Esophagus muscularis mucosa (tissue), 4 donors: ENCODE measurements at regions of chr17 and their contacts with region 1.

Region 1: DNA sequence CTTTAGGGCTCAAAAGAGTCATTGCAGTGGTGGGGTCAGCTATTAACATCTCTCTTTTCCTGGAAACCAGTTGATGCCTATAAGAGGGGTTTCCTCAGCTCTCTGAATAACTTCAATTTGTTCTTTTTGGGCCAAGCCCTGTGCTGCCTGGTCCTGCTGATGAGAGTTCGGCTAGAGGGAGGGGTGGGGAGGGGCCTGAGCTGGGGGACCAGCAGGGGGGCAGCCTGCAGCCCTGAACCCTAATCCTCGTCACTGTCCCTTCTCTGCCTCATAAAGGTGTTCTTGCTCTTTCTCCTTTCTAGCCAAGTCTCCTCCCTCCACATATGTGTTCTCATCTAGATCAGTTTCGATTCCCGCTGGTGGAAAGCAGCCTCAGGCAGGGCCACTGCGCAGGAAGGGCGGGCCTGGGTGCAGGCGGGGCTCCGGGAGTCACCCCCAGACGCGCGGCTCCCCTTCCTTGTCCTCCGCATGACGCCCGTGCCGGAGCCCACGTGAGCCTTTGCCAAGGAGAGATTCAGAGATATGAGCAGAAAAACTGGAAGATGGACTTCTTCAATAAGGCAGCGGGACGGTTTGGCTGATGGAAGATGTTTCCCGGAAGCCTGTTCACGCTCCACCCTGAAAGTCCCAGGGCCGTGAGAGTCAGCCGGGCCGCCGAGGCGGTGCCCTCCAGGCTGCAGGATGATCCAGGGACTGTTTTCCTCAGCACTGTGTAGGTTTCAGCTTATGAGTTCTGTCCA is 15.0 kb upstream of the RHOT1 start:
- DNase-seq: peak; percentile 95
- H3K4me3 ChIP-seq: peak overlapping the region; percentile 63 to 81 (median 70)
- H3K27ac ChIP-seq: peak overlapping the region; percentile 85 to 93 (median 88)
- H3K4me1 ChIP-seq: peaks cover 6 to 19% (median 16%) of the 10 kb centered on the region in 4 donors
- H3K27me3 ChIP-seq: no peaks in the 10 kb centered on the region
- CTCF ChIP-seq: no peak
- EP300 ChIP-seq: no peak
- POLR2A ChIP-seq: no peak

Region 2: GRCh38 chr17:32006957-32007462 is 120.3 kb before region 1 on chr17 and contains the start of gene LRRC37B:
- intact Hi-C with region 1: loop called (anchors 5 kb)
- DNase-seq: peak; percentile 97
- H3K4me3 ChIP-seq: peak within 1 kb of the TSS; percentile 84 to 99 (median 94)
- H3K27ac ChIP-seq: peak within 1 kb of the TSS; percentile 89 to 92 (median 91)
- H3K4me1 ChIP-seq: peaks cover 5 to 42% (median 28%) of the 10 kb centered on the region in 4 donors
- H3K27me3 ChIP-seq: no peaks in the 10 kb centered on the region
- CTCF ChIP-seq: peak in 2 of 3 experiments; percentile 90 to 98
- EP300 ChIP-seq: no peak
- POLR2A ChIP-seq: no peak
- total RNA-seq, gene LRRC37B: 7.5 to 15.4 (median 11.4) TPM

Region 3: DNA sequence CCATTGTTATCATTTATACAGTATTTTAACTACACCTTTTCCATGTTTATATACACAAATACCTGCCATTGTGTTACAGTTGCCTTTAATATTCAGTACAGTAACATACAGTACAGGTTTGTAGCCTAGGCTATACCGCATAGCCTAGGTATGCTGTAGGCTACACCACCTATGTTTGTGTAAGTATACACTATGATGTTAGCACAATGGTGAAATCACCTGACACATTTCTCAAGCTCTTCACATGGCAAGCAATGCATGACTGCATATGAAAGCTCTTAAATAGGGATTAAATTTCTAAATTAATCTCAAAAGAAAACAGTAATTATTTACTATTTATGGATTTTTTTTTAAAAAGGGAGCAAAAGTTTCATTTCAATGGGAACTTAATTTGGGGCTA is 108.1 kb before region 1 on chr17:
- intact Hi-C with region 1: no loop called
- DNase-seq: no peak
- H3K4me3 ChIP-seq: no peak overlapping the region
- H3K27ac ChIP-seq: no peak overlapping the region
- H3K4me1 ChIP-seq: peaks cover 3 to 9% (median 8%) of the 10 kb centered on the region in 4 donors
- H3K27me3 ChIP-seq: no peaks in the 10 kb centered on the region
- CTCF ChIP-seq: no peak
- EP300 ChIP-seq: no peak
- POLR2A ChIP-seq: no peak

Region 4: DNA sequence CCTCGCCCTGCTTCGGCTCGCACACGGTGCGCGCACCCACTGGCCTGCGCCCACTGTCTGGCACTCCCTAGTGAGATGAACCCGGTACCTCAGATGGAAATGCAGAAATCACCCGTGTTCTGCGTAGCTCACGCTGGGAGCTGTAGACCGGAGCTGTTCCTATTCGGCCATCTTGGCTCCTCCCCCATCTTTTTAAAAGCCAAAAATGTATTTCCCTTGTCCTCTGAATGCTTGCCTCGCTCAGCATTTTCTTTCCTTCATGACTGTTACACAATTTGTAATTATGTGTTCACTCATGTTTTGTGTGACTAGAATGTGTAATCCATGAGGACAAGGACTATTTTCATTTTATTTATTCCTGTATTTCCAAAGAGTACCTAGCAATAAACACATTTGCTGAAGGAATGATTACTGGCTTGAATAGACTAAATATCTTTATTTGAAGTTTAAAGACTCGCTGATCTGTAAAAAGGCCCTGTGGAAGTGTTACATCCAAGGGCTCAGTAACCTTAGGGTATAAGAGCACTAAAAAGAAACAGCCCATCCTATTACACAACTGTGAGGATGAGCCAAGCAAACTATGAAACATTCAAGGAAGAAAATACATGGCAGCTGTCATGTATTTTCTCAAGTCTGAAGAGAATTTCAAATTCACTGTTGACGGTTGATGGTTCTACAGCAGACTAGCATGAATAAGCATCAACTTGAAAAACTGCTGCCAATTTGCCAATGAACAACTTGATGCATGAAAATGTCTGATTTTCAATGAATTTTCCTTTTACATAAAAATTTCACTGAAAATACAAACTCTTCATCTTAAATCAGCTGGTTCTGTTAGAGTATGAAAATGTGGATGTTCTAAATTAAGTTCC is 557.0 kb after region 1 on chr17:
- intact Hi-C with region 1: no loop called
- DNase-seq: no peak
- H3K4me3 ChIP-seq: no peak overlapping the region
- H3K27ac ChIP-seq: no peak overlapping the region
- H3K4me1 ChIP-seq: no peaks in the 10 kb centered on the region
- H3K27me3 ChIP-seq: no peaks in the 10 kb centered on the region
- CTCF ChIP-seq: no peak
- EP300 ChIP-seq: no peak
- POLR2A ChIP-seq: no peak